ENCODE measurements at regions of chr3 and their contacts with region 1.

Region 1: GRCh38 chr3:31768479-31769123 is 212.5 kb downstream of the OSBPL10 start:
- DNase-seq: peak; percentile 38 to 73 (median 60)
- ATAC-seq: peak; percentile 45 to 74
- H3K4me3 ChIP-seq: no peak overlapping the region
- H3K27ac ChIP-seq: no peak overlapping the region
- H3K4me1 ChIP-seq: peaks cover 1% of the 10 kb centered on the region
- H3K27me3 ChIP-seq: no peaks in the 10 kb centered on the region

Region 2: DNA sequence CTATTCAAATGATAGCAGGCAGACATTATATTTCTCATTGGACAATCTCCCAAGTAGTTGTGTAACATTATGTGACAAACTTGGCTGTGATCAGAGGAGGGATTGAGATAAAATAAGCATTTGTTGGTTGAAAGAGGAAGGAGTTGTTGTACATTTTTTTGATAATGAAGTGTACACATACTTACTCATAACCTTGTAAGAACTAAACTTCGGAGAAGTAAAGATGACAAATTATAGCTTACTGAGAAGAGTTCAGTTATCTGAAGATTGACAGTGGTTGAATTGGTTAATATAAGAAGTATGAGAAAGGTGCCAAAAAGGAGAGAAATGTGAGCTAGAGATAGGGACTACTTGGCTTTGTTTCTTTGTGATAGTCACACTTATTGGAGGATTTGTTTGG is 203.3 kb before region 1 on chr3:
- intact Hi-C with region 1: no loop called
- DNase-seq: no peak
- ATAC-seq: peak; percentile 56 to 71
- H3K4me3 ChIP-seq: no peak overlapping the region
- H3K27ac ChIP-seq: no peak overlapping the region
- H3K4me1 ChIP-seq: no peaks in the 10 kb centered on the region
- H3K27me3 ChIP-seq: no peaks in the 10 kb centered on the region

Region 3: GRCh38 chr3:31610700-31611275 is 157.8 kb before region 1 on chr3:
- intact Hi-C with region 1: loop called in 3 of 4 experiments (anchors 5 to 10 kb)
- DNase-seq: no peak
- ATAC-seq: peak in 1 of 2 donors; percentile 37
- H3K4me3 ChIP-seq: no peak overlapping the region
- H3K27ac ChIP-seq: no peak overlapping the region
- H3K4me1 ChIP-seq: no peaks in the 10 kb centered on the region
- H3K27me3 ChIP-seq: no peaks in the 10 kb centered on the region

Region 4: GRCh38 chr3:31622636-31623288 is 145.8 kb before region 1 on chr3:
- intact Hi-C with region 1: loop called in 3 of 4 experiments (anchors 5 to 10 kb)
- DNase-seq: no peak
- ATAC-seq: no peak
- H3K4me3 ChIP-seq: no peak overlapping the region
- H3K27ac ChIP-seq: no peak overlapping the region
- H3K4me1 ChIP-seq: no peaks in the 10 kb centered on the region
- H3K27me3 ChIP-seq: no peaks in the 10 kb centered on the region